ENCODE measurements at regions of chr13 and their contacts with region 1.

Region 1: DNA sequence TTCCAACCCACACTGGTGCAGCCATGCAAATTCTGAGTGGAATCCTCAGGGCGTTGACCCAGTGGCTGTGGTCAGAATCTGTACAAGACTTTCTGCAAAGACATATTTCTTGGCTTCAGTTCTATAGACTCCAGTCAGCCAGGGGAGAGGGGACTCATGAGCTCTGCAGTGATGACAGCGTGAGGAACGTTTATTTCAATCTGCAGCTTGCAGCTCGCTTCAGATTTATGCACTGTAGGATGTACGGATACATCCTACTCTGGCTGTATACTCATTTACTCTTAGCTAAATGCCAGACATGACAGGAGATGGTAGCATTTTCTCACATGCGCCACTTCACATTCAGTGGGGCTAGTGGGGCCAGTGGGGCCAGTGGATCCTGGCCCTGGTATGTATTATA is 276.1 kb downstream of the FGF9 start:
- H3K4me3 Mint-ChIP-seq: no peak overlapping the region
- H3K27ac Mint-ChIP-seq: no peak overlapping the region
- H3K4me1 Mint-ChIP-seq: no peaks in the 10 kb centered on the region
- H3K27me3 Mint-ChIP-seq: no peaks in the 10 kb centered on the region

Region 2: DNA sequence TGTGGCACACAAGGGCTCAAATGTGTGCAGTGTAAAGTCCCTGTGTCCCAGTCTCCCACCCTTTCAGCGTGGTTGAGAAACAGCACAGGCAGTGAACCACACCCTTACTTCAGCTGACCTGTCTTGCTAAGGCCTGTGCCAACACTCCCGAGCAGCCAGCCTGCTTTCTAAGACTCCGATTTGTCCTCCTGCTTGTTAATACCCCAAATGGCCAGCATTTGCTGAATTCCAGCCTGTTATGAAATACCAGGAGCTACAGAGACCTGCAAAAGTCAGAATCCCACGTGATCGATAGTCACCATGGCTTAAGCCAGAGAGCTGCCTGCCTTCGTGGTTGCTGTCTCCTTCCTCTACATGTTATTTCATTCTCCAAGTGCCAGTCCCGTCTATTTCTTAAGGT is 75.6 kb before region 1 on chr13:
- intact Hi-C with region 1: no loop called
- H3K4me3 Mint-ChIP-seq: no peak overlapping the region
- H3K27ac Mint-ChIP-seq: no peak overlapping the region
- H3K4me1 Mint-ChIP-seq: no peaks in the 10 kb centered on the region
- H3K27me3 Mint-ChIP-seq: no peaks in the 10 kb centered on the region

Region 3: GRCh38 chr13:21897161-21897560 is 49.8 kb before region 1 on chr13:
- intact Hi-C with region 1: loop called (anchors 2 kb)
- H3K4me3 Mint-ChIP-seq: no peak overlapping the region
- H3K27ac Mint-ChIP-seq: no peak overlapping the region
- H3K4me1 Mint-ChIP-seq: peaks cover 7% of the 10 kb centered on the region
- H3K27me3 Mint-ChIP-seq: no peaks in the 10 kb centered on the region

Measured in dendritic cell treated with granulocyte-macrophage colony-stimulating factor and Interleukin-4, amounts not matched to agents 40 ng/mL and 50 ng/mL, for 4 days (primary cell).